ENCODE measurements at regions of chr4 and their contacts with region 1.

Region 1: GRCh38 chr4:101074326-101074725 is 273.0 kb downstream of the PPP3CA start:
- DNase-seq: no peak
- H3K4me3 ChIP-seq: no peak overlapping the region
- H3K27me3 ChIP-seq: no peaks in the 10 kb centered on the region
- CTCF ChIP-seq: no peak

Region 2: GRCh38 chr4:99563310-99564186 is 1510.8 kb before region 1 on chr4 and contains the start of gene TRMT10A:
- CTCF ChIA-PET with region 1: no interaction called
- POLR2A ChIA-PET with region 1: no interaction called
- DNase-seq: peak; percentile 82
- H3K4me3 ChIP-seq: peak within 1 kb of the TSS; percentile 67
- H3K27me3 ChIP-seq: no peaks in the 10 kb centered on the region
- CTCF ChIP-seq: no peak
- polyA plus RNA-seq, gene TRMT10A: 1.7 and 4.3 TPM in 2 replicates

Region 3: DNA sequence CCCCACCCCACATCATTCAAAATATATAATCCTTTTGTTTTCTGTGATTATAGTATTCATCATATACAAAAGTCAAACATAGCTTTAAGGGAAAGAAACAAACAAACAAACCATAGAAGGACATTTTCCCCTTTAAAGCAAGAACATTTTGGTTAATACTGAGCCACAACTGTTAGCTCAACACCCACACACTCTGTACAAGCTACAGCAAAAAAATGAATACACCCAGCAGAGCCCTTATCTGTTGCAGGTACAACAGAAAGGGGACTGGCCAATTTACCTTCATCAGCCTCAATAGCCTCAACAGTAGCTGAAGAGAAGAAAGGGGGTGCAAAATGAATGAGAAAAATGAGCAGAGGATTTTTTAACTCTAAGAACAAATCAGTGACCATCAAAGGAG is 45.4 kb before region 1 on chr4:
- CTCF ChIA-PET with region 1: no interaction called
- POLR2A ChIA-PET with region 1: interaction called, 10 read pairs
- DNase-seq: no peak
- H3K4me3 ChIP-seq: no peak overlapping the region
- H3K27me3 ChIP-seq: no peaks in the 10 kb centered on the region
- CTCF ChIP-seq: no peak

Region 4: GRCh38 chr4:101055392-101055791 is 18.9 kb before region 1 on chr4:
- CTCF ChIA-PET with region 1: no interaction called
- POLR2A ChIA-PET with region 1: no interaction called
- DNase-seq: no peak
- H3K4me3 ChIP-seq: no peak overlapping the region
- H3K27me3 ChIP-seq: no peaks in the 10 kb centered on the region
- CTCF ChIP-seq: no peak

Region 5: GRCh38 chr4:101103381-101104142 is 29.2 kb after region 1 on chr4:
- CTCF ChIA-PET with region 1: no interaction called
- POLR2A ChIA-PET with region 1: no interaction called
- DNase-seq: no peak
- H3K4me3 ChIP-seq: no peak overlapping the region
- H3K27me3 ChIP-seq: no peaks in the 10 kb centered on the region
- CTCF ChIP-seq: no peak

Region 6: DNA sequence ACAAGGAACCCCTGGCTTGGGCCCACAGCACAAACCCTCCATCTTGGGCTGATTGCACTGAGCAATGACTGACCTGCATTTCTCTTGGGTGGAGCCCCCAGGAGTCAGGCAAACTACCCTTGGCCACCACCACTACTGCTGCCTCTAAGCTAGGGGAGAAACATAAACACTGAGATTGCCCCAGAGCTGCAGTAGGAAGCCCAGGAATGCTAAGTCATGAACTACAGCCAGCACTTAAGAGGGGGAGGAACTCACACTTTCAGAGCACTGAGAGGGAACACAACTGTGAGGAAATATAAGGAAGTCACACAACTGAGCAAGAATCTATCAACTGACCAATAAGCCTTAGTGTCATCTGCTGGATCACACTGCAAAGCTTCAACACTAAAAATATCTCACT is 384.6 kb after region 1 on chr4:
- CTCF ChIA-PET with region 1: no interaction called
- POLR2A ChIA-PET with region 1: no interaction called
- DNase-seq: no peak
- H3K4me3 ChIP-seq: no peak overlapping the region
- H3K27me3 ChIP-seq: no peaks in the 10 kb centered on the region
- CTCF ChIP-seq: no peak

Measured in BJ (cell line).